ENCODE measurements at regions of chr11 and their contacts with region 1.

Region 1: DNA sequence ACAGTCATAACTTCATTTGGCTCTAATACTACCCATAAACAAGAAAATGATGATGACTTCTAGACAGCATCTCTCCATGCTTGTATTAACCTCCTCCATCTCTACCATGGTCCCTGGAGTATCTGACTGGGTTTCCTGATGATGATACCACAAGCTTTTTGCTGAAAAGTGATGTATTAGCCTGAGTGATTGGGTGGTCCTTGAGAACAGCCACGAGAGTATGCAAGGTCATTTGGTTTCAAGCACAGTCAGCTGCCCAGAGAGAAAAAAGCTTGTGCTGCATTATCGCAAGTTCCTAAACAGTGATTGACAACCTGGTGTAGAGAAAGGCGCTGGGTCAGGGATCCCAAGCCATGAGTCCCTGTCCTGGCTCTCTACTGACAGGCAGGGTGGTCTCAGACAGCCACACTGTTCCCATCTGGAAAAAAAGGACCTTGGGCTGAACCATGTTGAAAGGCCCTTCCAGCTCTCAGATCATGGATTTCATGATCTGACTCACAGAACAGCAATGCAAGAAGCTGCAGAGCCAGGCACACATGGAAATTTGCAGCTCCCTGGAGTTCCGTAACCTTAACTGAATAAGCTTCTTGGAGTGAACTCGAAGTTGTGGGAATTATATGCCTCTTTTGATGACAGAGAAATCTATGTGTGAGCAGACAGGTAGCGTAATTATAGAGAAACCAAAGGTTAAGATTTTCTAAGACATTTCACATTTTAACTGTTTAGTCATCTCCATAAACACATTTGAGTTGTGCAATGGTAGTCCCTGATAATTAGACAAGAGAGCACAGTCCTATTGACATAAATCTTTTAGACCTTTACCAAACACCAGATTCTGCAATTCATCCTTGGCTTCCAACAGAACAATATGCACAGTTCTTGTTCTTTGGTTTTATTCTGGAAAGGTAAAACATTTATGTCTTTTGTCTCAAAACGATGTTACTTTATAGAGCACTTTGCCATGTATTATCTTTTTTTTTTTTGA is 54.1 kb upstream of the UBASH3B start:
- DNase-seq: no peak
- ATAC-seq: no peak
- H3K4me3 ChIP-seq: no peak overlapping the region
- H3K4me3 Mint-ChIP-seq: no peak overlapping the region
- H3K27ac ChIP-seq: no peak overlapping the region
- H3K27ac Mint-ChIP-seq: no peak overlapping the region
- H3K4me1 ChIP-seq: no peaks in the 10 kb centered on the region
- H3K4me1 Mint-ChIP-seq: no peaks in the 10 kb centered on the region
- H3K27me3 ChIP-seq: peaks cover 0 to 16% of the 10 kb centered on the region in 2 experiments
- H3K27me3 Mint-ChIP-seq: peaks cover 11 to 14% of the 10 kb centered on the region in 2 donors

Region 2: GRCh38 chr11:122633219-122633829 is 31.9 kb after region 1 on chr11:
- CTCF ChIA-PET with region 1: no interaction called
- POLR2A ChIA-PET with region 1: no interaction called
- DNase-seq: peak in 2 of 35 experiments; percentile 11 to 60
- ATAC-seq: peak in 1 of 4 experiments; percentile 29
- H3K4me3 ChIP-seq: no peak overlapping the region
- H3K4me3 Mint-ChIP-seq: no peak overlapping the region
- H3K27ac ChIP-seq: no peak overlapping the region
- H3K27ac Mint-ChIP-seq: no peak overlapping the region
- H3K4me1 ChIP-seq: peaks cover 10 to 14% of the 10 kb centered on the region in 2 experiments
- H3K4me1 Mint-ChIP-seq: peaks cover 7 to 16% (median 13%) of the 10 kb centered on the region in 3 donors
- H3K27me3 ChIP-seq: no peaks in the 10 kb centered on the region
- H3K27me3 Mint-ChIP-seq: no peaks in the 10 kb centered on the region

Region 3: DNA sequence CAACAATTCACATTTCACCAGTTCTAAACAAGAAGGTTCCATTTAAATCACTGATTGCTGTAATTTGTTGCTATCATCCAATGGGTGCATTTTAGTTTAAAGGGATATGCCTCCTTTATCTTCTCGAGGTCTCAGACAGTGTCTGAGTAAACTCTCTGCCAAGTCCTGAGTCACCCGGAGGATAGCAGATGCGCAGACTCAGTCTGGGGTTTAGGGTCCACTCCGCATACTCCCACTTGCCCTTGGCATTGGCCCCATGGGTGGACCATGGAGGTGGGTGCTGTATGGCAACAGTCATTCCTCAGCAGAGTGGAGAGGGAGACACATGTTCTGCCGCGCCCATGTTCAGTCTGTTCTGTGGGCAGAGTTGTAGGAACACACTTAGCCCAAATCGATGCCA is 171.5 kb after region 1 on chr11:
- CTCF ChIA-PET with region 1: interaction called in 1 of 2 experiments, 10 read pairs
- POLR2A ChIA-PET with region 1: no interaction called
- DNase-seq: no peak
- ATAC-seq: no peak
- H3K4me3 ChIP-seq: no peak overlapping the region
- H3K4me3 Mint-ChIP-seq: no peak overlapping the region
- H3K27ac ChIP-seq: no peak overlapping the region
- H3K27ac Mint-ChIP-seq: no peak overlapping the region
- H3K4me1 ChIP-seq: peaks cover 0 to 6% of the 10 kb centered on the region in 2 experiments
- H3K4me1 Mint-ChIP-seq: peaks cover 19 to 35% (median 32%) of the 10 kb centered on the region in 3 donors
- H3K27me3 ChIP-seq: no peaks in the 10 kb centered on the region
- H3K27me3 Mint-ChIP-seq: no peaks in the 10 kb centered on the region

Measured in T-cell (primary cell).